Cardiac septum (tissue), 1 donor: ENCODE measurements at regions of chr17 and their contacts with region 1.

Region 1: DNA sequence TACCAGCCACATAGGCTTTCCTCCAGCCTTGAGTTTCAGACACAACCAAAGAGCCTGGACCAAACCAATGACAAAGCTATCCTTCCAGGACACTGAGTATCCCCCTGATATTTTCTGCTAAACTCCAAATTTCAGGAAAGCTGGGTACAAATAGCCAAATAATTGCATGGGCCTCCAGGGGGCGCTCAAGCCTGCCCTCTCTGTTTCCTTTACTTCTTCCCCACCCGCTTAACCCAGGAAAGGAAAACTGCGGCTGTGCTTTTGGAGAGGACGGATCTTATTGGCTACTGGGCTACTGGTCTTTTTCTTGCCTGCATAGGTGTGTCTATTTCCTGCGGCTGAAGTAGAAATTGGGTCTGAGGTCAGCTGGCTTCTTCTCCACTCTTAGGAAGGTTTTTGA is 30.1 kb downstream of the GNGT2 start:
- DNase-seq: peak; percentile 81

Region 2: DNA sequence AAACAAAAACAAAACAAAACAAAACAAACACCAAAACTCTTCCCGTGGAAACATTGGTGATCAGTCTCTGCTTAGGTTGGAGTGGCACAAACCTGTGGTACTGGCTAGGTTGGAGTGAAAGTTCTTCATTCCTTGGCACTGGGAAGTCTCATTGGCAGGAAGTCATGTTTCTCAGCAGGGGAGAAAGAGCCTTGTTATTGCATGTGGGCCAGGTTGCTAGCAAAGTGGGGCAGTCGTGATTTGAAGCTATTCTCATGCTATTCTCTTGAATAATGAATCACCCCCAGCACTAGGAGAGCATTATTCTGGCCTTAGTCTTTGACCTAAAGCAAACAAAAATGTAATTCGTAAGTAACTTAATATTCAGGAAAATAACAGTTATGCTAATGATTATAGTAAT is 72.0 kb before region 1 on chr17:
- intact Hi-C with region 1: no loop called
- DNase-seq: no peak

Region 3: DNA sequence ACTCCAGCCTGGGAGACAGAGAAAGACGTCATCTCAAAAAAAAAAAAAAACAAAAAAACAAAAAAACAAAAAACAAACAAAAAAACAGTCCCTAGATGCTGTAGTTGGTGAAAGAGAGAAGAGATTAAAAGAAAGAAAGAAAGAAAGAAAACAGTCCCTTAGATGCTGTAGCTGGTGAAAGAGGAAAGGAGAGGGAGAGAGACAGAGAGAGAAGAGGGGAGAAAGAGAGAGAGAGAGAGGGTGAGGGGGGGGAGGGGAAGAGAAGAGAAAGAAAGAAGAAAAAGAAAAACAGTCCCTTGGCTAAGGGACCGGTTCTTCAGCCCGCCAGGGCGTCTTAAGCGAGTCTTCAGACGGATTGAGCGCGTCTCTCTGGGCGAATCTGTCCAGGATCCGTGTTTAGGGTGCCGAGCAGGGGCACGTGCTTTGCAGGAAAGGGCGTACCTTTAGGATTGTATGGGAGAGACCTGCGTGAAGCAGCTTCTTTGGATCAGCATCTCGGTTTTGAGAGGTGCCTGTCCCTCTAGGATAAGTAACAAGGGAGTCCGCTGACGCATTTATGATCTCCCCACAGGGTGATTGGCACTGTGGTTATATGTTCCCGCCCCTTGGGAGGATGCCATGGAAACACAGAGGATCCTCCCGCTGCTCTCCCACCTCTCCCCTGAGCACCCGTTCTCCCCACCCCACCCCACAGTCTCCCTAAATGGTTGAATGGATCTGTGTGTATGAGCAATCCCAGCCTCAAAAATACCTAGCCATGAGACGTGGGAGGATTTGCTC is 13.3 kb after region 1 on chr17:
- intact Hi-C with region 1: no loop called
- DNase-seq: no peak

Region 4: DNA sequence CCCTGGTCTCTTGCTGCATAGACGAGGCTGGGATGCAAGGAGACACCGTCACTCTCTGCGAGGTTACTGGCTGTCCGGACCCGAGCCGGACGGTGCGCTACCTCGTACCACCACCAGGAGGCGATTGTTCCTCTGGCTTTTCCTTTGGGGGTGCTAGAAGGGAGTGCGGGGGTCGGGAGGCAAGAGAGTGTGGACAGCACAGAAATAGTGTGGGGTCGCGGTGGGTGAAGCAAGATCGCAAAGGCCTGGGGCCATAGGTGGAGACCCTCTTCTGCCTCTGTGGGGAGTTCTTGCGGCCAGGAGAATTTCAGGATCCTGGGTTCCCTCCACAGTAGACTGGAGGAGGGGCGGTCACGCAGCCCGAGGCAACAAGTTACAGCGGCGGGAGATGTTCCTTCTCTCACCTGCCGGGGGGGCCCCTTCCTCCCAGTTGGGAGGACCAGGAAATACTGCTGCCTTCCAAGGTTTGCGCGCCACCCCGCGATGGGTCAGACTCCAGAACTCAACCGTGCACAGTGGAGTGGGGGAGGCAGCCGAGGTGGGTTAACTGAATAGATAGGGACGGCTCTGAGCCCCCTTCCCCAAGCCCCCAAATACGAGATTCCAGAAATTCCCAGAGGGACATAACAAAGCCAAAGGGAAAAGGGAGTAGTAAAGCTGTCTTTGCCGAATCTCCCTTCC is 43.4 kb after region 1 on chr17:
- intact Hi-C with region 1: loop called (anchors 5 kb)
- DNase-seq: peak; percentile 89

Region 5: DNA sequence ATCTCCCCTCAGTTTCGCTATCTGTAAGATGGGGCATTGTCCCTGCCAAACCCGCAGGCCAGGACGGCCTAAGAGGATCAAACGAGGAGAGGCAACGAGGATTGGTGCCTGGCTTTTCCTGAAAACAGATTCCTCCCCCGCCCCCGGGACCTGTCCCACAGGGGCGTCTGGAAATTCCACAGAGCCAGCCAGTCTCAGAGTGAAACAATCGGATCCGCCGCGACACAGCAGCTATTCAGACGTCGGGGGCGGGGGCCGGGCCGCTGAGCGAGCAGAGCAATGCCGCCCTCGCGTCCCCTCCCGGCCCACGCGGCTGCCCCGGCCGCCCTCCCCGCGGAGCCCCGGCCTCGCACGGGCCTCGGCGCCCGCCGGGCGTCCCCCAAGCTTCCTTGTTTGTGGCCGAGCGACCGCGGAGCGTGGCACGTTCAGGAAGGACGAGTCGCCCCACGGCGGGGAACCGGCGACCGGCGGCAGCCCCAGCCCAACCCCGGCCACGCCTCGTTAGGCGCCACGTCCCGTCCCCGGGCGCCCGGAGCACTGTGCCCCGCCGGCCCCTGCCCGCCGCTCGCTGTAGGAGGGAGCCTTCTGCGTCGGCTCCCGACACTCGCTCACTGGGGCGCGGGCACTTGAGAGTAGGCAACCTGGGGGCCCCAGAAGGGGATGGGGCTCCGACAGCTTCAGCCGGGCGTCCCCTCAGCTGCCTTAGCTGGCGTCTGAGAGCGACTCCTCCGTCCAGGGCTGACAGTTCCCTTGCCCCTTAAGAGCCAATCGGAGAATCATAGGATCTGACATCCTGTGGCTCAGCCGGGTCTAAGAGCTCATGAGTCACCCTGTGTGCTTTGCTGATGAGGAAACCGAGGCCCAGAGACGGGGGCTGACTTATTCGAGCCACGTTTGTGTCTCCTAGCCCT is 80.0 kb after region 1 on chr17:
- intact Hi-C with region 1: loop called (anchors 10 kb)
- DNase-seq: peak; percentile 92

Region 6: GRCh38 chr17:49290690-49291359 is 110.5 kb after region 1 on chr17:
- intact Hi-C with region 1: loop called (anchors 5 kb)
- DNase-seq: peak; percentile 7

Region 7: GRCh38 chr17:49315551-49316257 is 135.4 kb after region 1 on chr17:
- intact Hi-C with region 1: no loop called
- DNase-seq: peak; percentile 78

Region 8: GRCh38 chr17:49390548-49391324 is 210.4 kb after region 1 on chr17:
- intact Hi-C with region 1: loop called (anchors 10 kb)
- DNase-seq: peak; percentile 77